HepG2 (cell line): ENCODE measurements at regions of chr7 and their contacts with region 1.

Region 1: GRCh38 chr7:20598459-20599309 is 16.8 kb upstream of the ABCB5 start:
- DNase-seq: peak; percentile 35
- ATAC-seq: peak; percentile 85
- H3K4me3 ChIP-seq: no peak overlapping the region
- H3K27ac ChIP-seq: no peak overlapping the region
- H3K4me1 ChIP-seq: no peaks in the 10 kb centered on the region
- H3K27me3 ChIP-seq: no peaks in the 10 kb centered on the region
- CTCF ChIP-seq: peak; percentile 85
- EP300 ChIP-seq: no peak
- POLR2A ChIP-seq: no peak
- RAD21 ChIP-seq: peak; percentile 65

Region 2: GRCh38 chr7:19708397-19709248 is 890.1 kb before region 1 on chr7 and contains the start of gene POLR1F:
- CTCF ChIA-PET with region 1: interaction called, 18 read pairs
- POLR2A ChIA-PET with region 1: interaction called, 7 read pairs
- in situ Hi-C with region 1: no loop called
- intact Hi-C with region 1: loop called (anchors 1 kb)
- DNase-seq: peak; percentile 89
- ATAC-seq: peak; percentile 98
- H3K4me3 ChIP-seq: peak within 1 kb of the TSS; percentile 90 to 100 (median 100)
- H3K27ac ChIP-seq: peak within 1 kb of the TSS; percentile 68
- H3K4me1 ChIP-seq: peaks cover 34% of the 10 kb centered on the region
- H3K27me3 ChIP-seq: peaks cover 0 to 6% of the 10 kb centered on the region in 2 experiments; a peak in 1 of 5 replicates
- CTCF ChIP-seq: peak; percentile 95
- EP300 ChIP-seq: peak; percentile 22 to 47; a peak in 1 of 4 replicates
- POLR2A ChIP-seq: peak; percentile 95 to 98
- RAD21 ChIP-seq: 0 out of 2 replicates have a peak, but pooled peaks have one; percentile 50
- total RNA-seq, gene POLR1F: 14.9 and 25.3 TPM in 2 replicates

Region 3: GRCh38 chr7:19713676-19714075 is 885.0 kb before region 1 on chr7:
- CTCF ChIA-PET with region 1: interaction called, 18 read pairs
- POLR2A ChIA-PET with region 1: interaction called, 7 read pairs
- in situ Hi-C with region 1: no loop called
- intact Hi-C with region 1: loop called (anchors 1 kb)
- DNase-seq: peak; percentile 23
- ATAC-seq: no peak
- H3K4me3 ChIP-seq: no peak overlapping the region
- H3K27ac ChIP-seq: no peak overlapping the region
- H3K4me1 ChIP-seq: peaks cover 10% of the 10 kb centered on the region; the same call in 1 of the 2 replicates
- H3K27me3 ChIP-seq: peaks cover 0 to under 1% of the 10 kb centered on the region in 2 experiments; a peak in 1 of 5 replicates
- CTCF ChIP-seq: peak; percentile 47
- EP300 ChIP-seq: no peak
- POLR2A ChIP-seq: no peak
- RAD21 ChIP-seq: no peak

Region 4: DNA sequence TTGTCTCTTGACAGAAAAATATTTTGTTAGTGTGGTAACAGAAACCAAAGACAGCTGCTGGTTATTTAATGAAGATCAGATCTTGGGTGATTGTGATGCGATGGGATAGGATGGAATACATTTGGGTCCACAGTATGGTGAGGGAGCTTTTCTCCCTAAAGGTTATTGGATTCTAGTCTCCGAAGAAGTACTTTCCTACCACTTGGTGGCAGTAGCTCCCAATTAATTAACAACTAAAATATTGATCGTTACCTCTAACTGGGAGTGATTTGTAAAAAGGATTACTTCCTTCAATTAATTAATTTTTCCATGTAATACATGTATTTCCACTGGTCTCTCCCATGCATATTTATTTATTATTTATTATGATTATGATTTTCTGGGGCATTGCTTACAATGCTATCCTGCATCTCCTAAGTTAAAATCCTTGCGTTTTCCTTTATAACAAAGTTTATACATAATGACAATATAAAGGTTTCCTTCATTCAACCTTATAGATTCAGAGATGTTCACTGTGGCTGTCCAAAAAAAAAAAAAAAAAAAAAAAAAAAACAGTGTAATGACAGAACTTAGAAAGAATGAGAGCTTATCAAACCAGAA is 850.8 kb before region 1 on chr7:
- CTCF ChIA-PET with region 1: interaction called, 16 read pairs
- POLR2A ChIA-PET with region 1: no interaction called
- in situ Hi-C with region 1: loop called (anchors 5 kb)
- intact Hi-C with region 1: loop called (anchors 1 kb)
- DNase-seq: peak; percentile 32
- ATAC-seq: peak; percentile 70
- H3K4me3 ChIP-seq: no peak overlapping the region
- H3K27ac ChIP-seq: no peak overlapping the region
- H3K4me1 ChIP-seq: no peaks in the 10 kb centered on the region
- H3K27me3 ChIP-seq: no peaks in the 10 kb centered on the region
- CTCF ChIP-seq: peak; percentile 56
- EP300 ChIP-seq: no peak
- POLR2A ChIP-seq: no peak
- RAD21 ChIP-seq: no peak

Region 5: DNA sequence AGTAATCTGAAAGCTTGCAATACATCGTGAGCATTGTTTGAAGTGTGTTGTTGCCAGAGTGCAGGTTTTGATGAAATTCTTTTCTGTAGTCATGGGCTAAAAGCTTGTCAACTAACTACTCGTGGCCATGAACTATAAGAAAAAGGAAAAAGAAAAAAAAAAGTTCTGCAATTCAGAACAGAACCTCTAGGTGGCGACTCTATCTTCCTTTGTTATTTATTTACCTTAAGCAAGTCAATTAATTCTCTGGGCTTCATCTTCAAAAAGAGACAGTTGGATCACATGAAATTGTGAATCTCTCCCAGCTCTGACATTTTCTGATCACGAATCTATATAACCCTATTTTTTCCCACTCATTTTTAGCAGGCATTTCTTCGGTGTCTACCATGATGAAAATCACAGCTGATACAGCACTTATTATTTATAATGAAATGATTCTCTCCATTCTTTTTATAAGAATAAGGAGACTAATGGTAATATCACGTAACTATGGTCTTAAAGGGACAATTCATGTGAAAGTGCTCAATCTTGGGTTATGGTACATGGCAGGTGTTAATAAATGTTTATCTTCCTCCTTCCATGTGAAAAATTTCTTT is 844.1 kb before region 1 on chr7:
- CTCF ChIA-PET with region 1: interaction called, 11 read pairs
- POLR2A ChIA-PET with region 1: no interaction called
- in situ Hi-C with region 1: loop called (anchors 5 kb)
- intact Hi-C with region 1: loop called (anchors 2 kb)
- DNase-seq: peak; percentile 35
- ATAC-seq: no peak
- H3K4me3 ChIP-seq: no peak overlapping the region
- H3K27ac ChIP-seq: no peak overlapping the region
- H3K4me1 ChIP-seq: no peaks in the 10 kb centered on the region
- H3K27me3 ChIP-seq: no peaks in the 10 kb centered on the region
- CTCF ChIP-seq: peak; percentile 50
- EP300 ChIP-seq: no peak
- POLR2A ChIP-seq: no peak
- RAD21 ChIP-seq: no peak

Region 6: GRCh38 chr7:20172736-20173334 is 425.8 kb before region 1 on chr7:
- CTCF ChIA-PET with region 1: no interaction called
- POLR2A ChIA-PET with region 1: no interaction called
- in situ Hi-C with region 1: loop called (anchors 25 kb)
- intact Hi-C with region 1: loop called (anchors 2 kb)
- DNase-seq: peak; percentile 33
- ATAC-seq: peak; percentile 93
- H3K4me3 ChIP-seq: no peak overlapping the region
- H3K27ac ChIP-seq: no peak overlapping the region
- H3K4me1 ChIP-seq: no peaks in the 10 kb centered on the region
- H3K27me3 ChIP-seq: no peaks in the 10 kb centered on the region
- CTCF ChIP-seq: peak; percentile 66
- EP300 ChIP-seq: no peak
- POLR2A ChIP-seq: no peak
- RAD21 ChIP-seq: no peak

Region 7: DNA sequence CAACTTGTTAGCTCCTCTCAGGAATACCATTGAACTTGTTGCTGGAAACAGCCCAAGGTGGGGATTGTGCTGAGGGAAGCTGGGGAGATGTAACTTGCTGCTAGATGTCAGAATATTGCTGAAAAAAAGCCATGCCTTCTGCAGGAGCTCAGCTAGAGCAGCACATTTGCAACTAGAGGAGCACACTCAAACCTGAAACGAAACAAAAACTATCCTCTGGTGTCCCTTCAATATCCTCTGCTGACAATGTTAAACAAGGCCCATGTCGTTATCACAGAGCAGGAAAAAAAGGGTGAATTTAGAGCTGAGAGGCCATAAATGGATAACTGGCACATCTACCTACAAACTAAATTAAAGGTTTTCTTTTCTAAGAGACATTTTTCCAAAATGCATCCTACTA is 327.8 kb before region 1 on chr7:
- CTCF ChIA-PET with region 1: no interaction called
- POLR2A ChIA-PET with region 1: no interaction called
- in situ Hi-C with region 1: no loop called
- intact Hi-C with region 1: no loop called
- DNase-seq: no peak
- ATAC-seq: no peak
- H3K4me3 ChIP-seq: no peak overlapping the region
- H3K27ac ChIP-seq: no peak overlapping the region
- H3K4me1 ChIP-seq: no peaks in the 10 kb centered on the region
- H3K27me3 ChIP-seq: no peaks in the 10 kb centered on the region
- CTCF ChIP-seq: no peak
- EP300 ChIP-seq: no peak
- POLR2A ChIP-seq: no peak
- RAD21 ChIP-seq: no peak

Region 8: GRCh38 chr7:20310963-20311742 is 287.5 kb before region 1 on chr7:
- CTCF ChIA-PET with region 1: no interaction called
- POLR2A ChIA-PET with region 1: no interaction called
- in situ Hi-C with region 1: no loop called
- intact Hi-C with region 1: loop called (anchors 1 kb)
- DNase-seq: peak; percentile 25
- ATAC-seq: no peak
- H3K4me3 ChIP-seq: no peak overlapping the region
- H3K27ac ChIP-seq: no peak overlapping the region
- H3K4me1 ChIP-seq: peaks cover 11% of the 10 kb centered on the region
- H3K27me3 ChIP-seq: no peaks in the 10 kb centered on the region
- CTCF ChIP-seq: peak; percentile 42
- EP300 ChIP-seq: no peak
- POLR2A ChIP-seq: no peak
- RAD21 ChIP-seq: no peak

Region 9: GRCh38 chr7:20647908-20648776 is 49.5 kb after region 1 on chr7:
- CTCF ChIA-PET with region 1: no interaction called
- POLR2A ChIA-PET with region 1: no interaction called
- in situ Hi-C with region 1: no loop called
- intact Hi-C with region 1: no loop called
- DNase-seq: peak; percentile 18
- ATAC-seq: peak; percentile 85
- H3K4me3 ChIP-seq: no peak overlapping the region
- H3K27ac ChIP-seq: no peak overlapping the region
- H3K4me1 ChIP-seq: no peaks in the 10 kb centered on the region
- H3K27me3 ChIP-seq: no peaks in the 10 kb centered on the region
- CTCF ChIP-seq: peak; percentile 36
- EP300 ChIP-seq: no peak
- POLR2A ChIP-seq: no peak
- RAD21 ChIP-seq: no peak